ENCODE measurements at regions of chr18 and their contacts with region 1.

Region 1: GRCh38 chr18:35240664-35241447 is at the start of gene ZNF397:
- DNase-seq: peak; percentile 98
- H3K4me3 ChIP-seq: peak within 1 kb of the TSS; percentile 63
- H3K27ac ChIP-seq: peak within 1 kb of the TSS; percentile 90
- H3K4me1 ChIP-seq: no peaks in the 10 kb centered on the region
- H3K27me3 ChIP-seq: no peaks in the 10 kb centered on the region
- CTCF ChIP-seq: no peak
- total RNA-seq, gene ZNF397: 22.7 to 25.2 TPM

Region 2: DNA sequence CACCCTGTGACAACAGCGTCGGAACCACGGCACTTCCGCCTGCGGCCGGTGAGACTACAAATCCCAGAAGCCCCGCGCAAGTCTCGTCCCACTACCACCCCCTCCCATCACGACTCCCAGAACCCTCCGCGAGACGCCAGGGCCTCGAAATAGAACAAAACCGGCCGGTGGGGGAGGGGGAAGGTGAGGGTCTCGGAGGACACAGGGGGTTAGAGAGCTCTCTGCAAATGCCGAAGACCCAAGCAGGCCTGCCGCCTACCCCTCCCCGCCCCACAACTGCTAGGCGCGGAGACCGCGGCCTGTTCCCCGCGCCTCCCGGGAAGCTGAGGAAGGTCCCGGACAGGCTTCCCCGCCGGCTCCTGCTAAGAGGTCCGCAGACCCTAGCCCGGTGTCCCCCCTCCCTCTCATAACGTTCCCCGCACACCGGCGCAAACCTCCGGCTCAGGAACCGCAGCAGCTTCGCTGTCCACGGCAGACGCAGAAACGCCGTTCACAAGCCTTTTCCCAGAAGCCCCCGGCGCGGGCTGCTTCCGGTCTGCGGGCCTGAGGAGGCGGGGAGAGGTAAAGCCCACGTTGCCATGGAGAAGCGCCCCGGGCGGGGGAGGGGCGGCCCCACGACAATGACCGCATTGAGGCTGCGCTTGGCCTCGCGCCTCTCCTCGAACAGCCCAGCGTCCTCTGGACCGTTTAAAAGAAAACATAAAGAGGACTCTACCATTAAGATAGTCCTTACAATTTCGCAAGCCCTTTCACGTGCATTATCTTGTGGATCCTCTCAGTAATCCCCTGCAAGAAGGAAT is 103.3 kb after region 1 on chr18 and contains the start of gene ZNF24:
- intact Hi-C with region 1: loop called (anchors 5 kb)
- DNase-seq: peak; percentile 98
- H3K4me3 ChIP-seq: peak within 1 kb of the TSS; percentile 92
- H3K27ac ChIP-seq: peak within 1 kb of the TSS; percentile 97
- H3K4me1 ChIP-seq: no peaks in the 10 kb centered on the region
- H3K27me3 ChIP-seq: no peaks in the 10 kb centered on the region
- CTCF ChIP-seq: no peak
- total RNA-seq, gene ZNF24: 49.1 to 55.5 TPM

Measured in colonic mucosa (tissue), 4 donors.